ENCODE measurements at regions of chr2 and their contacts with region 1.

Region 1: GRCh38 chr2:101419096-101419663 is 31.9 kb upstream of the CREG2 start:
- DNase-seq: peak; percentile 55 to 75 (median 62)
- ATAC-seq: peak; percentile 98
- H3K4me3 ChIP-seq: no peak overlapping the region
- H3K27ac ChIP-seq: no peak overlapping the region
- H3K4me1 ChIP-seq: no peaks in the 10 kb centered on the region
- H3K27me3 ChIP-seq: peaks cover 4 to 41% of the 10 kb centered on the region in 2 experiments; a peak in 3 of 5 replicates
- CTCF ChIP-seq: peak; percentile 60 to 82 (median 68)
- EP300 ChIP-seq: no peak
- POLR2A ChIP-seq: no peak
- RAD21 ChIP-seq: peak; percentile 83 to 85

Region 2: DNA sequence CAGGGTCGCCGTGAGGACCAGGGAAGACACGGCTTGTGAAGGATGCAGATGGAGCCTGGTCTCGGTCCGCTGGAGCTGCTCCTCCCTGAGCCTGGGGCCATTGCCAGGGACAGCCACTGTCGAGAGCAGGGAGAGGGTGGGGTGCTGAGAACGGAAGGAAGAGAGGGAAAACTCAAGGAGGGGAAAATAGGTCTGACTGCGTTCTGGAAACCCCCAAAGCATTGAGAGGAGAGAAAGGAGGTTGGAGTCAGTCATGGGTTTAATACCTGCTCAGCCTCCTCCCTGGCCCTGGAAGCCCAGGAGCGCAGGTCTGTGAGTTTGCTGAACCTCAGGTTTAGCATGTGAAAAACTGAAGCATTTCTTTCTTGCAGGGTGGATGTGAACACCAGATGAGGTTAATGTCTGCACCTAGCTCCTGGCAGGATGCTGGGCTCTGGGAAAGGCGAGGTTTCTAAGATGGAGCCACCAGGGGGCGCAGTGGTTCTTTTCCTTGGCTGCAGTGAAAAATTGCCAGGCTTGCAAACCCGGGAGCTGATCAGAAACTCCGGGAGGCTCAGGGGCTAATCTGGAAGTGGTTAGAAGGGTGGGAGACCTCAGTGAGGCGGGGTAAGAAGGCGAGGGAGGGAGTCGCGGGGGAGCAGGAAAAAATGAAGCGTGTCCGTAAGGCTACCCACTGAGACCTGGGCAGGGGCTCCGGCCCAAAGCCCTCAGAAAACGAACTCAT is 77.1 kb before region 1 on chr2:
- CTCF ChIA-PET with region 1: no interaction called
- POLR2A ChIA-PET with region 1: no interaction called
- in situ Hi-C with region 1: no loop called
- intact Hi-C with region 1: loop called (anchors 5 kb)
- DNase-seq: peak; percentile 70 to 78 (median 75)
- ATAC-seq: peak; percentile 89
- H3K4me3 ChIP-seq: no peak overlapping the region
- H3K27ac ChIP-seq: no peak overlapping the region
- H3K4me1 ChIP-seq: peaks cover 0 to 4% of the 10 kb centered on the region in 2 experiments; a peak in 2 of 5 replicates
- H3K27me3 ChIP-seq: peaks cover 5 to 27% of the 10 kb centered on the region in 2 experiments; a peak in 2 of 5 replicates
- CTCF ChIP-seq: peak; percentile 71 to 85 (median 83)
- EP300 ChIP-seq: no peak
- POLR2A ChIP-seq: no peak
- RAD21 ChIP-seq: peak; percentile 49 to 67

Region 3: DNA sequence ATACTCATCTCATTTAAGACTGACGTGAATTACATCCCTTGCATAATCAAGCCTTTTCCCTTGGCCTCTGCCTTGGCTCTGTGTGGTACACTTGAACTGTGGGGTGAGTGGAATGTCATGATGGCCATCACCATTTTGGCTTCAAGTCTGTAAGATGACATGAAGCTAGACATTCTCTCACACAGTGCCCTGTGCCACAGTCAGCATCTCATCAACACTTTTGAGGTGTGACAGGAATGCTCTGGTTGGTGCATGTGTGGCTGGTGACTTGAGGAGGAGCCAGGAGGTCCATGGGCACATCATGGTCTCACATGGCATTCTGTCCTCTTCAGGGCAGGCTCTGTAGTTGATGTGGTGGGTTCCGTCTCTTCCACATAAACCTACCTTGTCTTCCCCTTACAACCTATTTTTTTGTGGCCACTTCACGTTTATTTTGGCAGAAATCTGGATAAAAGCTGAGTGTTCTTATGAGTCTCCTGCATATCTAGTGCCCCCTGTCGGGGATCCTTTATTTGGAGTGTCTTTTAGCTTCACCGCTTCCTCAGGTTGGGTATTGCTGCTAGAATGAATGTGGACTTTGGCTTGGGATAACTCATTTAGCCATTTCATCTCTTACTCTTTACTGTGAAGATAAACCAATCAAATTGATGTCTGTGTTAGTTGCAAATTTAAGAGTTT is 306.5 kb after region 1 on chr2:
- CTCF ChIA-PET with region 1: no interaction called
- POLR2A ChIA-PET with region 1: no interaction called
- in situ Hi-C with region 1: no loop called
- intact Hi-C with region 1: loop called (anchors 10 kb)
- DNase-seq: peak; percentile 24 to 60 (median 27)
- ATAC-seq: peak; percentile 68
- H3K4me3 ChIP-seq: no peak overlapping the region
- H3K27ac ChIP-seq: no peak overlapping the region
- H3K4me1 ChIP-seq: peaks cover 0 to 4% of the 10 kb centered on the region in 2 experiments; a peak in 3 of 5 replicates
- H3K27me3 ChIP-seq: no peaks in the 10 kb centered on the region
- CTCF ChIP-seq: peak; percentile 43 to 65 (median 56)
- EP300 ChIP-seq: no peak
- POLR2A ChIP-seq: no peak
- RAD21 ChIP-seq: peak; percentile 40 to 62

Region 4: DNA sequence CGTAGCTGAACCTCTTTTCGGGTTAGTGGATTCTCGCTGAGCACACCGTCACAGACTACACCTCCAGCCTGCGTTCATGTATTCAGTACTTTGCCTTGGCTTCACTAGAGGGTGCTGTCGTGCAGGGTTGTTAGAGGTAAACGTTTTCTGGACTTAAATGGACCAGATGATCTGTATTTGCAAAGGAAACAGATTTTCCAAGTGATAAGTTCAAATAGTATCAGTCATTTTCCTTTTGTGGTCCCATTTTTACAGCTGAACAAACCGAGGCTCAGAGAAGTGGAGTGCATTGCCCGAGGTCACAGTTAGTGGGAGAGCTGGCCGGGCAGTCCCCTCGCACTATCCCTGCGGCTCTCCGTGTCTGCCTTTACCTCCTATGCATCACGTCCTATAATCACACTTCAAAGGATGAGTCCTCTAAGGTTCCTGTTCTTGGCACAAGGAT is 404.2 kb after region 1 on chr2:
- CTCF ChIA-PET with region 1: no interaction called
- POLR2A ChIA-PET with region 1: no interaction called
- in situ Hi-C with region 1: loop called (anchors 10 kb)
- intact Hi-C with region 1: no loop called
- DNase-seq: peak; percentile 47 to 82 (median 52)
- ATAC-seq: peak; percentile 92
- H3K4me3 ChIP-seq: no peak overlapping the region
- H3K27ac ChIP-seq: no peak overlapping the region
- H3K4me1 ChIP-seq: peaks cover 0 to 37% of the 10 kb centered on the region in 2 experiments; a peak in 3 of 5 replicates
- H3K27me3 ChIP-seq: no peaks in the 10 kb centered on the region
- CTCF ChIP-seq: peak; percentile 70 to 85 (median 83)
- EP300 ChIP-seq: no peak
- POLR2A ChIP-seq: no peak
- RAD21 ChIP-seq: peak; percentile 52 to 66

Region 5: DNA sequence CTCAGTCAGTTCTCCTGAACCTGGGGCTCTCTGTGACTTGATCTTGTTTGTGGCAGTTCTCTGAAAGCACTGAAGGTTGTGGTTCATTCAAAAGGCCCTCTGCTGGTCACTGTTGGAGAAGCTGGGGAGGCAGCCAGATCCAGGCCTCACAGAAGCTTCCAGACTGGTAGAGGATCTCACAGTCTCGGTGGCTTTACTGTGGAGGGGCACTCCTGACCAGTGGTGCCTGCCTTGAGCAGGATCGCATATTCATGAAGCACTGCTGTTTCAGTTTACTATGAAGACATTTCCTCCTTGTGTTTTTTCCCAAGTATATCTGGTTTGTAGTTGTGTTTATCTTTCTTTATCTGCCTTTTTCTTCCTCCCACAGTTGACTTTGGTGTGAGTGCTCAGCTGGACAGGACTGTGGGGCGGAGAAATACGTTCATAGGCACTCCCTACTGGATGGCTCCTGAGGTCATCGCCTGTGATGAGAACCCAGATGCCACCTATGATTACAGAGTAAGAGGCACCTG is 412.2 kb after region 1 on chr2:
- CTCF ChIA-PET with region 1: interaction called, 9 read pairs
- POLR2A ChIA-PET with region 1: no interaction called
- in situ Hi-C with region 1: loop called (anchors 10 kb)
- intact Hi-C with region 1: loop called (anchors 1 kb)
- DNase-seq: peak; percentile 43 to 74 (median 54)
- ATAC-seq: peak; percentile 99
- H3K4me3 ChIP-seq: no peak overlapping the region
- H3K27ac ChIP-seq: no peak overlapping the region; the same call in 2 of the 3 replicates
- H3K4me1 ChIP-seq: peaks cover 0 to 31% of the 10 kb centered on the region in 2 experiments; a peak in 3 of 5 replicates
- H3K27me3 ChIP-seq: no peaks in the 10 kb centered on the region
- CTCF ChIP-seq: peak; percentile 76 to 81 (median 80)
- EP300 ChIP-seq: no peak
- POLR2A ChIP-seq: no peak
- RAD21 ChIP-seq: peak; percentile 66 to 72

Region 6: GRCh38 chr2:101983928-101984327 is 564.7 kb after region 1 on chr2:
- CTCF ChIA-PET with region 1: no interaction called
- POLR2A ChIA-PET with region 1: no interaction called
- in situ Hi-C with region 1: no loop called
- intact Hi-C with region 1: loop called (anchors 10 kb)
- DNase-seq: no peak
- ATAC-seq: 0 out of 3 replicates have a peak, but pooled peaks have one; percentile 43
- H3K4me3 ChIP-seq: no peak overlapping the region
- H3K27ac ChIP-seq: no peak overlapping the region
- H3K4me1 ChIP-seq: 0 out of 5 replicates have a peak, but pooled peaks cover 0 to 3% of the 10 kb centered on the region in 2 experiments
- H3K27me3 ChIP-seq: peaks cover 25 to 77% of the 10 kb centered on the region in 2 experiments; a peak in 4 of 5 replicates
- CTCF ChIP-seq: peak in 2 of 3 experiments; percentile 12 to 38; a peak in 1 of 6 replicates
- EP300 ChIP-seq: no peak
- POLR2A ChIP-seq: no peak
- RAD21 ChIP-seq: peak; percentile 25 to 50; a peak in 2 of 4 replicates

Measured in K562 (cell line).